Activated naive CD4-positive, alpha-beta T cell treated with anti-CD3 and anti-CD28 coated beads for 36 hours (primary cell): ENCODE measurements at regions of chr7 and their contacts with region 1.

Region 1: DNA sequence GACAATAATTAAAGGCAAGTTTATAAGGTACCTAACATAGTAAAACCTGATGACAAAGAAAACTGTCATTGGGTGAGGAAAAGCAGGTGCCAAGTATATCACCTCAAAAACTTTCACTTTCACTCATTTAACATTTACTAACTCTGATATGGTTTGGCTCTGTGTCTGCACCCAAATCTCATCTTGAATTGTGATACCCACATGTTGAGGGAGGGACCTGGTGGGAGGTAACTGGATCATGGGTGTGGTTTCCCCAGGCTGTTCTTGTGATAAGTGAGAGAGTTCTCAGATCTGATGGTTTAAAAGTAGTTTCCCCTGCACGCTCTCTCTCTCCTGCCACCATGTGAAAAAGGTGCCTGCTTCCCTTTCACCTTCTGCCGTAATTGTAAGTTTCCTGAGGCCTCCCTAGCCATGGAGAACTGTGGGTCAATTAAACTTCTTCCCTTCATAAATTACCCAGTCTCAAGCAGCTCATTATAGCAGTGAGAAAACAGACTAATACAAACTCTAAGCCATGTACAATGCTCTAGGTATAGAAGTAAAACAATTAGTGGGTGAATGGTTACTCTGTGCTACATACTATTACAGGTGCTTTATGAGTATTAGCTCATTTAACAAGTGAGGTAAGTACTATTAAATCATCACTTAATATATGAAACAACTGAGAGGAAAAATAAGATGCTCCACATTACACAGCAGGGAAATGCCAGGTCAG is 199.0 kb downstream of the CHCHD3 start:
- DNase-seq: peak; percentile 65
- H3K4me3 Mint-ChIP-seq: no peak overlapping the region
- H3K27ac Mint-ChIP-seq: peak overlapping the region; percentile 47
- H3K4me1 Mint-ChIP-seq: peaks cover 32% of the 10 kb centered on the region
- H3K27me3 Mint-ChIP-seq: no peaks in the 10 kb centered on the region

Region 2: GRCh38 chr7:132773527-132773956 is 109.3 kb before region 1 on chr7:
- CTCF ChIA-PET with region 1: no interaction called
- intact Hi-C with region 1: loop called (anchors 1 kb)
- DNase-seq: no peak
- H3K4me3 Mint-ChIP-seq: no peak overlapping the region
- H3K27ac Mint-ChIP-seq: no peak overlapping the region
- H3K4me1 Mint-ChIP-seq: peaks cover 39% of the 10 kb centered on the region
- H3K27me3 Mint-ChIP-seq: no peaks in the 10 kb centered on the region